Vagina (tissue), 2 donors: ENCODE measurements at regions of chr9 and their contacts with region 1.

Region 1: GRCh38 chr9:88092797-88093331 is 45.4 kb downstream of the SPATA31C2 start:
- DNase-seq: no peak
- H3K4me3 ChIP-seq: peak overlapping the region in 1 of 2 donors; percentile 6
- H3K27ac ChIP-seq: peak overlapping the region; percentile 31
- H3K4me1 ChIP-seq: no peaks in the 10 kb centered on the region
- H3K27me3 ChIP-seq: no peaks in the 10 kb centered on the region
- CTCF ChIP-seq: no peak
- POLR2A ChIP-seq: no peak

Region 2: GRCh38 chr9:88583901-88584596 is 491.2 kb after region 1 on chr9:
- intact Hi-C with region 1: loop called (anchors 10 kb)
- DNase-seq: no peak
- H3K4me3 ChIP-seq: no peak overlapping the region
- H3K27ac ChIP-seq: no peak overlapping the region
- H3K4me1 ChIP-seq: no peaks in the 10 kb centered on the region
- H3K27me3 ChIP-seq: no peaks in the 10 kb centered on the region
- CTCF ChIP-seq: no peak
- POLR2A ChIP-seq: no peak